MCF 10A (cell line): ENCODE measurements at regions of chr2 and their contacts with region 1.

Region 1: GRCh38 chr2:38508311-38509039 is 94.3 kb downstream of the HNRNPLL start:
- DNase-seq: peak; percentile 95
- H3K4me3 Mint-ChIP-seq: no peak overlapping the region
- H3K27ac Mint-ChIP-seq: no peak overlapping the region
- H3K4me1 Mint-ChIP-seq: peaks cover 34% of the 10 kb centered on the region
- H3K27me3 Mint-ChIP-seq: no peaks in the 10 kb centered on the region
- CTCF ChIP-seq: peak; percentile 51

Region 2: GRCh38 chr2:37982147-37982582 is 526.3 kb before region 1 on chr2:
- CTCF ChIA-PET with region 1: interaction called, 4 read pairs
- POLR2A ChIA-PET with region 1: no interaction called
- intact Hi-C with region 1: loop called (anchors 2 kb)
- DNase-seq: peak; percentile 79
- H3K4me3 Mint-ChIP-seq: no peak overlapping the region
- H3K27ac Mint-ChIP-seq: no peak overlapping the region
- H3K4me1 Mint-ChIP-seq: peaks cover 14% of the 10 kb centered on the region
- H3K27me3 Mint-ChIP-seq: no peaks in the 10 kb centered on the region
- CTCF ChIP-seq: peak; percentile 88

Region 3: GRCh38 chr2:38248255-38248654 is 260.2 kb before region 1 on chr2:
- CTCF ChIA-PET with region 1: no interaction called
- POLR2A ChIA-PET with region 1: no interaction called
- intact Hi-C with region 1: no loop called
- DNase-seq: no peak
- H3K4me3 Mint-ChIP-seq: no peak overlapping the region
- H3K27ac Mint-ChIP-seq: no peak overlapping the region
- H3K4me1 Mint-ChIP-seq: peaks cover 19% of the 10 kb centered on the region
- H3K27me3 Mint-ChIP-seq: no peaks in the 10 kb centered on the region
- CTCF ChIP-seq: no peak

Region 4: GRCh38 chr2:38323623-38324022 is 184.9 kb before region 1 on chr2:
- CTCF ChIA-PET with region 1: interaction called, 78 read pairs
- POLR2A ChIA-PET with region 1: interaction called, 4 read pairs
- intact Hi-C with region 1: no loop called
- DNase-seq: no peak
- H3K4me3 Mint-ChIP-seq: no peak overlapping the region
- H3K27ac Mint-ChIP-seq: no peak overlapping the region
- H3K4me1 Mint-ChIP-seq: peaks cover 15% of the 10 kb centered on the region
- H3K27me3 Mint-ChIP-seq: no peaks in the 10 kb centered on the region
- CTCF ChIP-seq: no peak

Region 5: DNA sequence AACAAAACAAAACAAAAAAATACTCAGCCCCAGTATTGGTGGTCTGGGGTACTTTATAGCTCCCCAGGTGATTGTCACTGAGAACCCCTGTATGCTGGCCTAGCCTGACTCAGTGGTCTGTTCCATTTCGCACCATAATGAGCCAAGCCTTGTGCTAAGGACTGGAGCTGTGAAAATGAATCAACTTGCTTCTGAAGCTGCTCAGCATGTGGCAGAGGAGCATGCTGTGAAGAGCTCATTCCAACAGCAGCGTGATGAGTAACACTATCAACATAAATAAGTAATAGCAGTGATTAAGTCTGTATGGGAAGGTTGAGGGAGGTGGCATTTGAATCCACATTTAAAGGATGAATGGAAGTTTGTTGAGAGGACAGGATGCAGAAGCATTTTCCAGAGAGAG is 64.2 kb before region 1 on chr2:
- CTCF ChIA-PET with region 1: interaction called, 16 read pairs
- POLR2A ChIA-PET with region 1: interaction called, 6 read pairs
- intact Hi-C with region 1: no loop called
- DNase-seq: peak; percentile 60
- H3K4me3 Mint-ChIP-seq: no peak overlapping the region
- H3K27ac Mint-ChIP-seq: no peak overlapping the region
- H3K4me1 Mint-ChIP-seq: peaks cover 37% of the 10 kb centered on the region
- H3K27me3 Mint-ChIP-seq: no peaks in the 10 kb centered on the region
- CTCF ChIP-seq: no peak

Region 6: DNA sequence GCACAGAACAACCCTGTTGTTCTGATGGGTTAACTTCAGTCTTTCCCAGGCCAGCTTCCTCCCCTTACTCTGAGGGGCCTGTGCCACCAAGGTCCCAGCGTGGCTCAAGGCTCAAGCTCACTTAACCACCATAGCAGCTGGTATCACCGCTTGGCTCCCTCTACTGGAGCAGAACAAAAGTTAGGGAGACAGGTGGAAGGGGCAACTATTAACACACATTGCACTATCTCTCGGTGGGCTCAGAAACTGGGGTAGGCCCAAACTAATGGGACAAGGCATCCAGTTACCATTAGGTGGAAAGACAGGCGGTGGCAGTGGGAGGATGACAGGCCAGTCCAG is 42.7 kb before region 1 on chr2:
- CTCF ChIA-PET with region 1: interaction called, 17 read pairs
- POLR2A ChIA-PET with region 1: interaction called, 15 read pairs
- intact Hi-C with region 1: loop called (anchors 2 kb)
- DNase-seq: peak; percentile 64
- H3K4me3 Mint-ChIP-seq: no peak overlapping the region
- H3K27ac Mint-ChIP-seq: peak overlapping the region; percentile 70
- H3K4me1 Mint-ChIP-seq: peaks cover 24% of the 10 kb centered on the region
- H3K27me3 Mint-ChIP-seq: no peaks in the 10 kb centered on the region
- CTCF ChIP-seq: peak; percentile 31

Region 7: DNA sequence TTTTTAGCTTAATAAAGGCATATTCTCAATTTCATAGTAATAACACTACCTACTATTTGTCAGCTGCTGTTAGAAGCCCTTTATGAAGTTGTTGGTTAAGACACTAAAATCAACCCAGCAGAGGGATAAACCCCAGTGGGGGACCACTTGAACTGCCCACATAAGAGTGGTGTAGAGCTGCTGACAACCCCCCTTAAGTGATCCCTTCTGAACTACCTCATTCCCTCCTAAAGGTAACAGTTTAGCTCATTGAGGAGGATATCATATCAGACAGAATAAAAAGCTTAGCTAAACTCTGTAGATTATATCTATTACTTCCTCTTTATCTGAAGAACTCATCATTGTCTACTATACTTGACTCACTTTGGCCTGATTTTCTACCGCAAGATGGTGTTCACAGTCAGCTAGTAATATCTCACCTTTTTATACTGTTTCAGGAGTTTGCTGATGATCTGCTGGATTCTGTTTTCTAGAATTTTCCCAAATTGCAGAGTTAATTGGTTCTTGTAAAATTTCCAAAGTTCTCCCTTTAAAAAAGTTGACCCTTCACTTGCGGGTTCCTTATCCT is 173.6 kb after region 1 on chr2:
- CTCF ChIA-PET with region 1: no interaction called
- POLR2A ChIA-PET with region 1: no interaction called
- intact Hi-C with region 1: no loop called
- DNase-seq: no peak
- H3K4me3 Mint-ChIP-seq: no peak overlapping the region
- H3K27ac Mint-ChIP-seq: no peak overlapping the region
- H3K4me1 Mint-ChIP-seq: peaks cover 4% of the 10 kb centered on the region
- H3K27me3 Mint-ChIP-seq: no peaks in the 10 kb centered on the region
- CTCF ChIP-seq: no peak